ENCODE measurements at regions of chr7 and their contacts with region 1.

Region 1: GRCh38 chr7:116809636-116810266 is 52.6 kb upstream of the CAPZA2 start:
- DNase-seq: peak; percentile 80
- H3K4me3 ChIP-seq: no peak overlapping the region
- H3K27ac ChIP-seq: no peak overlapping the region
- H3K4me1 ChIP-seq: peaks cover 20% of the 10 kb centered on the region
- H3K27me3 ChIP-seq: no peaks in the 10 kb centered on the region
- CTCF ChIP-seq: peak; percentile 71

Region 2: GRCh38 chr7:114889646-114890285 is 1920.0 kb before region 1 on chr7:
- CTCF ChIA-PET with region 1: no interaction called
- POLR2A ChIA-PET with region 1: no interaction called
- intact Hi-C with region 1: no loop called
- DNase-seq: peak; percentile 82
- H3K4me3 ChIP-seq: no peak overlapping the region
- H3K27ac ChIP-seq: peak overlapping the region; percentile 92
- H3K4me1 ChIP-seq: peaks cover 6% of the 10 kb centered on the region
- H3K27me3 ChIP-seq: no peaks in the 10 kb centered on the region
- CTCF ChIP-seq: no peak

Region 3: DNA sequence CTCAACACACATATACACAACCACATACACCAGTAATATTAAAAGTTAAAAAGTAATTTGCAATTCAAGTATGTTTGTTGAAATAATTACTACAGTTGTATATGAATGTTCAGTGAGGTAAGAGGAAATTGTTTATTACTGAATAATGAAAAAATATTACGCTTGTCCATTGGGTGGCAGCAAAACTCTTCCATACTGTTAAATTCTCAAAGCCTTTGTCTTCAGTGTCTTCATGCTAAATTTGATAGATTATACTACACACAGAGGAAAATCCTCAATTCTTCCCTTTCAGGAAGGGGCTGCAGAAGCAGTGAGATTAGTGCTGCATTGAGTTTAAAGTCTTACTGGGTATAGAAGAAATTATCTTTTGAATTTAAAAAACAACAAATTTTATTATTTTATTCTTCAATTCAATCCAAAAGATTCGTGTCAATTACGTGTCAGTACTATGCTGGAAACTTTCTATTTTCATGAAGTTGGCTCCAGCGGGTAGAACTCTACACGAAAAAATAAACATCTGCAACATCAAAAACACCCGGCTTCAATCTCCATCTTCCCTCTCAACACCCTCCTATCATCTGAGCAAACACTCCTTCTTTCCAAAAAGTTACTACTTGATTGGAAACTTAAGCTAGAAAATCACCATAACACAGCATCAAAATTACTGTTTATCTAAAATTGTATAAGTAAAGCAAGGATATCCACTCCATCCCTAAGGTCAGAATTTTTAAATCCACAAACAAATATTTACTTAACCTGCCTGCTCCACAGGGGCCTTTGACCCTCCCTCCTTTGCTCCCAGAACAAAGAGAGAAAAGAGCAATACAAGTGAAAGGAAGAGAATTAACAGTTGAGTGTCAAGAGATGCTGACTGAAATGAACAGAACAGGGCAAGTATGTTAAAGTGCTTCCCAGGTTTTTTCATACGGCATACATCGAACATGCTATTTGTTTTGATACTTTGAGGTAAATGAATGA is 636.4 kb before region 1 on chr7:
- CTCF ChIA-PET with region 1: no interaction called
- POLR2A ChIA-PET with region 1: no interaction called
- intact Hi-C with region 1: loop called (anchors 2 kb)
- DNase-seq: peak; percentile 84
- H3K4me3 ChIP-seq: no peak overlapping the region
- H3K27ac ChIP-seq: peak overlapping the region; percentile 3
- H3K4me1 ChIP-seq: peaks cover 4% of the 10 kb centered on the region
- H3K27me3 ChIP-seq: no peaks in the 10 kb centered on the region
- CTCF ChIP-seq: peak; percentile 68

Region 4: DNA sequence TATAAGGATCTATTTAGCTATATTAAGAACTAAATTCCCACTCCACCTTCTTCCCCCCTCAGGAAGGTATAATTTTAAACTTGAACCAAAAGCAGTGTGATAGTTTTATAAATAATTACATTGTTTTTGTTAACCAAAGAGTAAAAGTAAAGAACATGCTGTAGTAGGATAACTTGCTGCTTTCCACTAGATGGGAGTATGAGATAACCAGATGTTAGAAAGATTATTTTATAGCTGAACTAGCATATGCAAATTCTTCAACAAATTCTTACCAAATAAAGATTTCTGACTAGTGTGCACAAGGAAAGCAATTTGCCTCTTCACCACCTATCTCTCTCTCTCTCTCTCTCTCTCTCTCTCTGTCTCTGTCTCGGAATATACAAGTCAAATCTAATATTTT is 567.6 kb before region 1 on chr7:
- CTCF ChIA-PET with region 1: no interaction called
- POLR2A ChIA-PET with region 1: no interaction called
- intact Hi-C with region 1: loop called (anchors 5 kb)
- DNase-seq: peak; percentile 52
- H3K4me3 ChIP-seq: no peak overlapping the region
- H3K27ac ChIP-seq: peak overlapping the region; percentile 87
- H3K4me1 ChIP-seq: peaks cover 47% of the 10 kb centered on the region
- H3K27me3 ChIP-seq: no peaks in the 10 kb centered on the region
- CTCF ChIP-seq: peak; percentile 45; the same call in 1 of the 2 replicates

Region 5: DNA sequence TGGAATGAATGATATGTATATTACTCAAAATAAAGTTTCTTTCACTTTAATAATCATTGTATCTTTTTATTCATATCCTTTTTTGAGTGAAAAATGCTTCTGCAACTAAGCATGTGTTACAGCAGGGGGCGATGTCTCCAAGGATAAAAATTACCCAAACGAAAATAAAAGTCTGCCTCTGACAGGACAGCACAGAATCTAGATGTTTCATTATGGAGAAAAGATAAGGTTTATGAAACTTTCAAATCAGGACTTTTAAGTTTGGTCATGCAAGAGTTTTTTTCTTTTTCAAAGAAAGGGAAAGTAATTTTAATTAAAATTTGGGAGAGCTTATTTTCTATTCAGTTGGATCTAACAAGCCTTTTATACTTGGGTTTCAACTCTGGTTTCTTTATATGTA is 551.0 kb before region 1 on chr7:
- CTCF ChIA-PET with region 1: interaction called, 4 read pairs
- POLR2A ChIA-PET with region 1: no interaction called
- intact Hi-C with region 1: loop called (anchors 2 kb)
- DNase-seq: peak; percentile 86
- H3K4me3 ChIP-seq: no peak overlapping the region
- H3K27ac ChIP-seq: peak overlapping the region; percentile 79
- H3K4me1 ChIP-seq: peaks cover 36% of the 10 kb centered on the region
- H3K27me3 ChIP-seq: no peaks in the 10 kb centered on the region
- CTCF ChIP-seq: peak; percentile 87

Region 6: DNA sequence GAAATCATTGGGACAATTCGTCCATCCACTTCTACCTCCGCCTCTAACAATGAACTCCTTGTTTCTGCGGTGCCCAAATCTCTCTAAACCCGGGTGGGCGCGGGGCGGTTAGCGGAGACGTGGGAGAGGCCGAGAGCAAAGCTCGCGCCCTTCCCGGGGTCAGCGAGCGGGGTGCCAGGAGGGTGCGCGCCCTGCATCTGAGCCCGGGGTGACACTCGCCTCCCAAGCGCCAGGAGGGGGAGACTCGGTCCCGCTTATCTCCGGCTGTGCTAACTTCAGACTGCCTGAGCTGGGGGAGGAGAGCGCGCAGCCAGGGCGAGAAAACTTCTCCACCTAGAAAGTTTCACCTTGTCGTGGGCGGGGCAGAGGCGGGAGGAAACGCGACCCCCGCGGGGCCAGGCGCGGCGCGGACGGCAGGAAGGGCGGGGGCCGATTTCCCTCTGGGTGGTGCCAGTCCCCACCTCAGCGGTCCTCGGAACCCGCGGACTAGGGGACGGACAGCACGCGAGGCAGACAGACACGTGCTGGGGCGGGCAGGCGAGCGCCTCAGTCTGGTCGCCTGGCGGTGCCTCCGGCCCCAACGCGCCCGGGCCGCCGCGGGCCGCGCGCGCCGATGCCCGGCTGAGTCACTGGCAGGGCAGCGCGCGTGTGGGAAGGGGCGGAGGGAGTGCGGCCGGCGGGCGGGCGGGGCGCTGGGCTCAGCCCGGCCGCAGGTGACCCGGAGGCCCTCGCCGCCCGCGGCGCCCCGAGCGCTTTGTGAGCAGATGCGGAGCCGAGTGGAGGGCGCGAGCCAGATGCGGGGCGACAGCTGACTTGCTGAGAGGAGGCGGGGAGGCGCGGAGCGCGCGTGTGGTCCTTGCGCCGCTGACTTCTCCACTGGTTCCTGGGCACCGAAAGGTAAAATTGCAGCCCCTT is 137.8 kb before region 1 on chr7 and contains the start of gene MET:
- CTCF ChIA-PET with region 1: no interaction called
- POLR2A ChIA-PET with region 1: no interaction called
- intact Hi-C with region 1: loop called (anchors 2 kb)
- DNase-seq: peak; percentile 82
- H3K4me3 ChIP-seq: peak within 1 kb of the TSS; percentile 64
- H3K27ac ChIP-seq: no peak within 1 kb of the TSS
- H3K4me1 ChIP-seq: no peaks in the 10 kb centered on the region
- H3K27me3 ChIP-seq: no peaks in the 10 kb centered on the region
- CTCF ChIP-seq: peak; percentile 69
- total RNA-seq, gene MET: 5.7 and 6.8 TPM in 2 replicates

Region 7: DNA sequence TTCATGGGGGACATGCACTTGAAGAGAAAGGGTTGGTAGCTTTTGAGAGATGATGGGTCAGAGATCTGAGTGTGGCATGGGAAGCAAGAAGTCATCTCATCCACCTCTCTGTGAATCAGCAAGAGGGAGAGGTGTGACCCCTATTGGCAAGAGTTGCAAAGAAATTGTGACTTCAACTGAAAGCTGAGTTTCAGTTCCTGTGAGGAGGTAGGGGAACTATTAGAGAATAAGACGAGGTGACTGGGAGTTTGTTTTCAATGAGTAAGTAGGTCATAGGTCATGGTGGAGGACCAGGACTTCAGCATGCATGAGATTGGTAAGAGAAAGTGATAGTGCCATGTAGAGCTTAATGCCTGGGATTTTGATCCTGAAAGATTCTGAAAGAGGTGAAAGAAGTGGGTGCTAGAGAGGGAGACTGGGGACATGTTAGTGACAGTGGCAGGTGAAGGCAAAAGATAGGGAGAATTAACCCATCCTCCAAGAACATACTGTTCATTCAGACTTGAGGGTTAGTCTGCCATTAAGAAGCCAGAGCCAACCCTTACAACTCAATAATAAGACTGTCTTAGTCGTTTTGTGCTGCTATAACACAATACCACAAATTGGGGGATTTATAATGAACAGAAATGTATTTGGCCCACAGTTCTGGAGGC is 22.8 kb before region 1 on chr7:
- CTCF ChIA-PET with region 1: no interaction called
- POLR2A ChIA-PET with region 1: interaction called, 11 read pairs
- intact Hi-C with region 1: no loop called
- DNase-seq: peak; percentile 61
- H3K4me3 ChIP-seq: no peak overlapping the region
- H3K27ac ChIP-seq: no peak overlapping the region
- H3K4me1 ChIP-seq: peaks cover 13% of the 10 kb centered on the region
- H3K27me3 ChIP-seq: no peaks in the 10 kb centered on the region
- CTCF ChIP-seq: peak; percentile 64

Measured in A673 (cell line).